ENCODE measurements at regions of chr14 and their contacts with region 1.

Region 1: GRCh38 chr14:33682740-33683139 is 268.1 kb downstream of the EGLN3 start:
- DNase-seq: no peak
- ATAC-seq: no peak
- H3K4me3 ChIP-seq: no peak overlapping the region
- H3K27ac ChIP-seq: no peak overlapping the region
- H3K4me1 ChIP-seq: no peaks in the 10 kb centered on the region
- H3K27me3 ChIP-seq: no peaks in the 10 kb centered on the region
- CTCF ChIP-seq: no peak

Region 2: DNA sequence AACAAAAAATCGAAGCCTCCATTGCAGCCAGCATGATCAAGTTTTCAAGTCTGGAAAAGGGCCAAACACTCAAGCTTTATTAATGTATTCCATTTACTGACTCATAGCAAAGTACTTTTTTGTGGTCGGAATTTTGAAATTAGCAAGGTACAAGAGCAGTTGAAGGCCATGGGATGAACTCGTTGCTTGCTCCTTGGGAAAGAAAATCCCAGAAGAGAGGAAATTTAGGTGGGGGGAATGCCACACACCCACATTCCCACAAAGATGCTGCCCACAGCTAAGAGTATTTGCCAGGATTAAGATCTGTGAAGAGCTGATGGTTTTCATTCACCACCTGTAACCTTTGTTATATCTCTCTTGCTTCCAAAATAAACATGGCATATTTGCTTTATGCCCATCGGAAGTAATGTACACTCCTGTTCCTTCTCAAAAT is 65.5 kb before region 1 on chr14:
- CTCF ChIA-PET with region 1: no interaction called
- POLR2A ChIA-PET with region 1: no interaction called
- in situ Hi-C with region 1: no loop called
- intact Hi-C with region 1: no loop called
- DNase-seq: no peak
- ATAC-seq: no peak
- H3K4me3 ChIP-seq: no peak overlapping the region
- H3K27ac ChIP-seq: no peak overlapping the region
- H3K4me1 ChIP-seq: no peaks in the 10 kb centered on the region
- H3K27me3 ChIP-seq: no peaks in the 10 kb centered on the region
- CTCF ChIP-seq: no peak

Region 3: DNA sequence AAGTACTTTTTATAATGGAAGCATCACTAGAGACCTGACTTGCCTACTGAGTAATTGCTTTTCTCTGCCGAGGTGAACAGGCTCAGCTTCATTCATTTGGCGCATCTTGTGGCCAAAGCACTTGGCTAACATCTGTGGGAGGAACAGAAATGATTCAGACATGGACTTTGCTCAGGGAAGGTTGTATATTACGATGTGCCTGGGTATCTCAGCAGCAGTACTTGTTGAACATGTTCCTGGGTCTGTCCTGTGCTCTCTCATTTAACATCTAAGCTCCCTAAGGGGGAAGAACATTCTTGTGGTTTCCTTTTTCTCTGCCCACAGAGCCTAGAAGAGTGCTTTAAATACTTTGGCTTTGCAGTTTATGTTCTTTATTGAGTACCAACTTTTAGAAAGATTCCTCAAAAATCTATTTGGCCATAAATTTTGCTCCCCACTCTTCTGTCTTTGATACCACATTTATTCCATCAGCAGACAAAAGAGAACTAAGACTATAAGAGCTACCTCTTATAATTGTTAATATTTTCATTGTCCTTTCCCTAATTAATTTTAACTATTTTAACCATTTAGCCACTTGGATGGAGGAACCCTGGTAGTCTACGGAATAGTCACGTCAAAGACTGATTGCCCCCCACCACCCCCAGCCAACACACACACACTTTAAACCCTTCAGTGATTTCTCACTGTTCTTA is 369.4 kb after region 1 on chr14:
- CTCF ChIA-PET with region 1: no interaction called
- POLR2A ChIA-PET with region 1: no interaction called
- in situ Hi-C with region 1: no loop called
- intact Hi-C with region 1: no loop called
- DNase-seq: no peak
- ATAC-seq: no peak
- H3K4me3 ChIP-seq: no peak overlapping the region
- H3K27ac ChIP-seq: no peak overlapping the region
- H3K4me1 ChIP-seq: no peaks in the 10 kb centered on the region
- H3K27me3 ChIP-seq: no peaks in the 10 kb centered on the region
- CTCF ChIP-seq: no peak

Region 4: DNA sequence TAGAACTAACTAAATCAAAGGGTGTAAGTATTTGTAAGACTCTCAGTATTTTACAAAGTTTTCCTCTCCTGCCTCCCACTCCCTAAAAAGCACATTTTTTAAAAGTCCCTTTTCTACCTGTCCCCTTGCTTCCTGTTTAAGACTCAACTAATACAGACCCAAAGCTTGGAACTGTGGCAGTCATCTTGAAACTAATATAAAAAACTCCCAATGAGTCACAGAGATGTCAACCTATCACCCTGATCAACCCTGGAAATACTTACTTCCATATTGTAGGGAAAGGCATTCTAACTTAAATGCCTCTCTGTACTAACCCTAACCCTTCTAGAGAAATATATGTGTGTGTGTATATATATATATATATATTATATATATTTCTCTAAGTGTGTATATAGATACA is 594.5 kb after region 1 on chr14:
- CTCF ChIA-PET with region 1: no interaction called
- POLR2A ChIA-PET with region 1: interaction called, 18 read pairs
- in situ Hi-C with region 1: no loop called
- intact Hi-C with region 1: no loop called
- DNase-seq: no peak
- ATAC-seq: no peak
- H3K4me3 ChIP-seq: no peak overlapping the region
- H3K27ac ChIP-seq: no peak overlapping the region
- H3K4me1 ChIP-seq: no peaks in the 10 kb centered on the region
- H3K27me3 ChIP-seq: no peaks in the 10 kb centered on the region
- CTCF ChIP-seq: no peak